ENCODE measurements at regions of chr19 and their contacts with region 1.

Region 1: DNA sequence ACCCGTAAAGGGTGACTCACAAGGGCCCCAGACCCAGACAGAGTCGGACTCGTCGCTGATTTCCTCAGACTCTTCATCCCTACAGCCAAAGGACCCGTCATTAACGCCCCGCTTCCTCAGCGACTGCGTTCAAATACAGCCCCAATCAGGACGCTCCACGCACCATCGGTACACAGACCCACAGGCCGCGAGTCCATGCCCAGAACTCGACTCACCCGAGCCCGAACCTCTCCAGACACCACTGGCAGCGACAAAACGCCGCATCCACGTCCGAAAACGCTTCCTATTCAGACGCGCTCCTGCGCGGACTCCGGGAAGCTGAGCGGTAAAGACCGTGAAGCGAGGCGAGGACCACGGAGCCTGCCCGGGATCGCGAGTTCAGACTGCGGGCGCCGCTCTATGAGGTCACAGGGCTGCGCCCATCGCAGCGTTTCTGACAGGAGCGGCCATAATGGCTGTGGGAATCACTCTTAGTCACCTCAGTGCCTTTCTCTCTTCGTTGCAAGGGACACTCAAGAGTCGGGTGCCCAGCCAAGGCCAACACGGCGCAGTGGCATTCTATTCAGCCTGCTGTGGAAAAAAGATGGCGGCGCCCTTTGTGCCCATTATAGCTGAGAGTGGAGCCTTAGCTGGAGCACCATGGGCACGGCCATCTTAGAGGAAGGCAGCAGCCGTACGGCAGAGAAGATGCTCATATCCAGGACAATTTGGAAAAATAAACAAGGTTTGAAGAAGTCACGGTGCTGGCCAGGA is at the start of gene ZNF614:
- DNase-seq: peak; percentile 80 to 95 (median 89)
- ATAC-seq: peak; percentile 93
- H3K4me3 ChIP-seq: peak within 1 kb of the TSS; percentile 89
- H3K4me3 Mint-ChIP-seq: peak within 1 kb of the TSS; percentile 89 to 99 (median 96)
- H3K27ac ChIP-seq: peak within 1 kb of the TSS; percentile 90
- H3K27ac Mint-ChIP-seq: peak within 1 kb of the TSS; percentile 91 to 99 (median 96)
- H3K4me1 ChIP-seq: peaks cover 12 to 16% of the 10 kb centered on the region in 2 donors
- H3K4me1 Mint-ChIP-seq: peaks cover 6 to 35% (median 31%) of the 10 kb centered on the region in 7 donors
- H3K27me3 ChIP-seq: no peaks in the 10 kb centered on the region
- H3K27me3 Mint-ChIP-seq: no peaks in the 10 kb centered on the region
- total RNA-seq, gene ZNF614: 5.0 to 14.1 (median 11.1) TPM

Region 2: DNA sequence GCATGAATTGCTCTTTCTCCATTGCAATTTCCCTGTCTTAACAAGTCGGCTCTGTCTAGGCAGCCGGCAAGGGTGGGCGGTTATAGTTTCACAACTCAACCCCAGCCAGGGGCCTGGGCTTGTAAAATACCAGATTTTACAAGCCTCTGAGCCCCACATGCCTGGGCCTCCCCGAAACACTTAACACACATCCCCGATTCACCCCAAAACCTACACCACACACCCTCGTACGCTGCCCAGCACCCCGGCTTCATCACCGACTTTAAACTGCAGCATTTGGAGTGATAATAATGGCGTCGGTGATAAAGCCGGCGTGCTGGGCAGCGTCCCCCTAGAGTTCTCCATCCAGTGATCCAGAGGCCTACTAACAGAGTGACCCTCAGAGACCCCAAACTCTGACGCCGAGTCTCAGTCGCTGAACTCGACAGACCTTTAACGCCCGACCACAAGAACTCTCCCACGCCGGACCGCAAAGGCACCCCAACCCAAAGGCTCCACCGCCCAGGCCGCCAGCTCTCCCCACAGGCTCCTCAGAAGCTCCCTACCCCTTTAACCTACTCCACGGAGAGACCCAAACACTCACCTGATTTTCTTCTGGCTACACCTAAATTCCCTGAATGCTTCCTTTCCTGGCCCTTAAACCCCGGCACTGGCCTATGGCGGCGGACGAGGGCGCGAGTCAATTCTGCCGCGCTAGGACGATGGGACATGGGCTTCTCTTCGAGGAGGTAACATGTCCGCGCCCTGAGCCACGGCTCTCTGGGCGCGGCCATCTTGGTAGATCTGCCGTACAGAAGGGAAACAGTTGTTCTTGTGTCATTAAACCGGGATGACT is 123.7 kb before region 1 on chr19 and contains the start of gene ZNF649:
- CTCF ChIA-PET with region 1: no interaction called
- POLR2A ChIA-PET with region 1: interaction called, 3 read pairs
- intact Hi-C with region 1: loop called (anchors 1 kb)
- DNase-seq: peak; percentile 67 to 84 (median 74)
- ATAC-seq: peak; percentile 98
- H3K4me3 ChIP-seq: peak within 1 kb of the TSS; percentile 84
- H3K4me3 Mint-ChIP-seq: peak within 1 kb of the TSS; percentile 87 to 100 (median 99)
- H3K27ac ChIP-seq: peak within 1 kb of the TSS; percentile 84
- H3K27ac Mint-ChIP-seq: peak within 1 kb of the TSS; percentile 89 to 99 (median 97)
- H3K4me1 ChIP-seq: peaks cover 0 to 5% of the 10 kb centered on the region in 2 donors
- H3K4me1 Mint-ChIP-seq: peaks cover 8 to 33% (median 28%) of the 10 kb centered on the region in 7 donors
- H3K27me3 ChIP-seq: no peaks in the 10 kb centered on the region
- H3K27me3 Mint-ChIP-seq: peaks cover 0 to 31% (median 19%) of the 10 kb centered on the region in 5 donors
- total RNA-seq, gene ZNF649: 11.1 to 33.4 (median 14.5) TPM

Region 3: GRCh38 chr19:51986309-51987291 is 41.6 kb before region 1 on chr19 and contains the start of gene ZNF350:
- CTCF ChIA-PET with region 1: no interaction called
- POLR2A ChIA-PET with region 1: no interaction called
- intact Hi-C with region 1: loop called (anchors 1 kb)
- DNase-seq: peak; percentile 61 to 94 (median 89)
- ATAC-seq: peak; percentile 100
- H3K4me3 ChIP-seq: peak within 1 kb of the TSS; percentile 89
- H3K4me3 Mint-ChIP-seq: peak within 1 kb of the TSS; percentile 93 to 99 (median 96)
- H3K27ac ChIP-seq: peak within 1 kb of the TSS; percentile 82
- H3K27ac Mint-ChIP-seq: peak within 1 kb of the TSS; percentile 91 to 98 (median 94)
- H3K4me1 ChIP-seq: peaks cover 6 to 10% of the 10 kb centered on the region in 2 donors
- H3K4me1 Mint-ChIP-seq: peaks cover 10 to 33% (median 20%) of the 10 kb centered on the region in 7 donors
- H3K27me3 ChIP-seq: no peaks in the 10 kb centered on the region
- H3K27me3 Mint-ChIP-seq: no peaks in the 10 kb centered on the region
- total RNA-seq, gene ZNF350: 18.1 to 43.7 (median 36.0) TPM

Region 4: GRCh38 chr19:52095172-52096014 is 67.2 kb after region 1 on chr19 and contains the start of gene ZNF841:
- CTCF ChIA-PET with region 1: no interaction called
- POLR2A ChIA-PET with region 1: no interaction called
- intact Hi-C with region 1: loop called (anchors 1 kb)
- DNase-seq: peak; percentile 64 to 84 (median 75)
- ATAC-seq: peak; percentile 98
- H3K4me3 ChIP-seq: peak within 1 kb of the TSS; percentile 86
- H3K4me3 Mint-ChIP-seq: peak within 1 kb of the TSS; percentile 87 to 99 (median 96)
- H3K27ac ChIP-seq: peak within 1 kb of the TSS; percentile 81
- H3K27ac Mint-ChIP-seq: peak within 1 kb of the TSS; percentile 62 to 99 (median 94)
- H3K4me1 ChIP-seq: peaks cover 0 to 9% of the 10 kb centered on the region in 2 donors
- H3K4me1 Mint-ChIP-seq: peaks cover 24 to 47% (median 39%) of the 10 kb centered on the region in 7 donors
- H3K27me3 ChIP-seq: no peaks in the 10 kb centered on the region
- H3K27me3 Mint-ChIP-seq: no peaks in the 10 kb centered on the region
- total RNA-seq, gene ZNF841: 22.6 to 43.5 (median 27.5) TPM

Region 5: GRCh38 chr19:52584736-52585440 is 556.7 kb after region 1 on chr19:
- CTCF ChIA-PET with region 1: no interaction called
- POLR2A ChIA-PET with region 1: no interaction called
- intact Hi-C with region 1: no loop called
- DNase-seq: no peak
- ATAC-seq: no peak
- H3K4me3 ChIP-seq: no peak overlapping the region
- H3K4me3 Mint-ChIP-seq: no peak overlapping the region
- H3K27ac ChIP-seq: no peak overlapping the region
- H3K27ac Mint-ChIP-seq: no peak overlapping the region
- H3K4me1 ChIP-seq: no peaks in the 10 kb centered on the region
- H3K4me1 Mint-ChIP-seq: no peaks in the 10 kb centered on the region
- H3K27me3 ChIP-seq: no peaks in the 10 kb centered on the region
- H3K27me3 Mint-ChIP-seq: no peaks in the 10 kb centered on the region

Region 6: DNA sequence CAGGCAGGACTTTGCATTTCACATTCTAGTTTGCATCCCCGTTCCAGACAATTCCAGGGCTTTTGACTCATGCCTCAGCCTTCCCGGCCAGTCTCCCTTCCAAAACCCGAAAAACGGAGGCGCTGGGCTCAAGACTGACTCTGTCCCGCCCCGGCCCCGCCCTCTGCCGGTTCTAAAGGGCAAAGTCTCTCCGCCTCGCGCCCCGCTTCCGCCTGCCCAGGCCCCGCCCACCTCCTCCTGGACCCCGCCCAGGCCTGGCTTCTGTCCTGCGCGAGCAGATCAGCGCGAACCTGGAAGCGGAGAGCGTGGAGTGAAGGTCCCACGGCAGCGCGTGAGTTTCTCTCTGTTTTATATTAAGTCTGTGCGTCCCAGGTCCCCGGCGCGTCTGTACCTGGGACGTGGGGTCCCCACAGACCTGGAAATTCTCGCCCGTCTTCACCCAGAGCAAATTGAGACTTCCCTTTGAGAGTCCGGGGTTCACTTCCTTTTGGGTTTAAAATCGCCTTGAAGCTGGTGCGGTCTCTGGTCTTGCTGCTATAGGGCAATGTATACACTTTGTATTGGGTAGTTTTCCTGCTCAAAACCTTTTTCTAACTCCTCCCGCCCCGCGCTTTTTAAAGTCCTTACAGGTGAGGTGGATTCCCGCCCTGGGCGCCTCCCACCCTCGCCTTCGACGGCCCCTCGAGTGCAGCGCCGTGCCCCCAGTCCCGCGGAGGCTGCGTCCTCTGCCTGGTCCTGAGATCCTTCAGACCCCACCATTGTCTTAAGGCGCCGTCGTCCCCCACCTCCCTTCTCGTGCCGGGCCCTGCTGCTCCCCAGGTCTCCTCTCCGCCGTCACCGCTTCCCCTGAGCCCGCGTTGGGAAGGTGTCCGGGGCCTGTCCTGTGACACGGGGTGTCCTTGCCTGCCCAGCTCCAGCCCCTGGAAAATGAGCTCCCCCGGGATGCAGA is 573.1 kb after region 1 on chr19:
- CTCF ChIA-PET with region 1: no interaction called
- POLR2A ChIA-PET with region 1: no interaction called
- intact Hi-C with region 1: loop called in 1 of 2 experiments (anchors 5 kb)
- DNase-seq: peak; percentile 84 to 94 (median 91)
- ATAC-seq: peak; percentile 100
- H3K4me3 ChIP-seq: peak overlapping the region; percentile 89
- H3K4me3 Mint-ChIP-seq: peak overlapping the region; percentile 86 to 99 (median 92)
- H3K27ac ChIP-seq: peak overlapping the region; percentile 81
- H3K27ac Mint-ChIP-seq: peak overlapping the region; percentile 63 to 93 (median 81)
- H3K4me1 ChIP-seq: peaks cover 10 to 12% of the 10 kb centered on the region in 2 donors
- H3K4me1 Mint-ChIP-seq: peaks cover 11 to 43% (median 37%) of the 10 kb centered on the region in 7 donors
- H3K27me3 ChIP-seq: no peaks in the 10 kb centered on the region
- H3K27me3 Mint-ChIP-seq: no peaks in the 10 kb centered on the region